CD4-positive, alpha-beta memory T cell (primary cell): ENCODE measurements at regions of chr3 and their contacts with region 1.

Region 1: DNA sequence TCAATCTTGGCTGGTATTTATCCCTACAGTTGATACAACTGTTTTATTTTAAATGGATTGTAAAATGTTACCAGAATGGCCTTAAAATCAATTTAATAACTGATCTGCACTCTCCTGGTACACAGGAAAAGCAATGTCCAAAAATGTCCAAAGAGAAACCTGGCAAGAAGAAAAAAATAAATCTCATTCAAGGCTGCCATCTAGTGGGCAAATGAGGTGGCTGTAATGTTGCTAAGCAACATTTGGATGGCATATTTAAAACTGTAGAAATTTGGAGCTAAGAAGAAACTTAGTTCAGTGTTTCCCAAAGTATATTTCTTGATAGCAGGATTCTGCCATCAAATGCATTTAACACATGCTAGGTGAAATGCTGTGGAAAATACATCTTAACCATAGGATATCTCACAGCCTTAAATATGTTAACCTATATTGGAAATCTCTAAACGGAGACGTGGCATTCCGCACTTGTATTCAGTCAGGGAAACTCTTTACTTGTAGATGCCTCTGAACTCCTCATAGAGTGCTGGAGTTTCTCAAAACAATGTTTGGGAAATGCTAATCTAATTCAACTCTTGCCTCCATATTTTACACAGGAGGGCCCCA is 216.8 kb downstream of the ERC2 start:
- DNase-seq: peak in 2 of 5 donors; percentile 2 to 12
- H3K4me3 ChIP-seq: no peak overlapping the region
- H3K4me3 Mint-ChIP-seq: no peak overlapping the region
- H3K27ac ChIP-seq: no peak overlapping the region
- H3K27ac Mint-ChIP-seq: no peak overlapping the region
- H3K4me1 ChIP-seq: no peaks in the 10 kb centered on the region
- H3K4me1 Mint-ChIP-seq: no peaks in the 10 kb centered on the region
- H3K27me3 ChIP-seq: no peaks in the 10 kb centered on the region
- H3K27me3 Mint-ChIP-seq: no peaks in the 10 kb centered on the region

Region 2: GRCh38 chr3:56238299-56238698 is 13.1 kb before region 1 on chr3:
- CTCF ChIA-PET with region 1: interaction called, 17 read pairs
- POLR2A ChIA-PET with region 1: no interaction called
- intact Hi-C with region 1: no loop called
- DNase-seq: no peak
- H3K4me3 ChIP-seq: no peak overlapping the region
- H3K4me3 Mint-ChIP-seq: no peak overlapping the region
- H3K27ac ChIP-seq: no peak overlapping the region
- H3K27ac Mint-ChIP-seq: no peak overlapping the region
- H3K4me1 ChIP-seq: no peaks in the 10 kb centered on the region
- H3K4me1 Mint-ChIP-seq: no peaks in the 10 kb centered on the region
- H3K27me3 ChIP-seq: no peaks in the 10 kb centered on the region
- H3K27me3 Mint-ChIP-seq: peaks cover 0 to 5% of the 10 kb centered on the region in 2 donors

Region 3: DNA sequence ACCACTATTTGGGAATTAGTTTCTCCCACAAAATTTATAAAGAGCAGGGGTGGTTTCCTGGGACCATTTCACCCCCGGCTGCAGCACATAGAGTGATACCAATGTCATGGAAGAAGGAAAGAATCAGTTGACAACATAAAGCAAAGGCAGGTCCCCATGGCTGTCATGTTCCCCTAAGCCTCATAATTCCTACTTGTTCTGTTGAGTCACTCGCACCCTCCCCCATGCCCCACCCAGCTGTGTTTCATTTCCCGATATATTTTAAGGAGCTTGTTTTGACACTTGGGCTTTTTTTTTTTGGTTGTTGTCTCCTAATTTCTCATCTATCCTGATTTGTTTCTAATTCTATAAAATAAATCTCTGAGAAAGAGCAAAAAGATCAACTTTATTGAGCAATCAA is 191.9 kb after region 1 on chr3:
- CTCF ChIA-PET with region 1: no interaction called
- POLR2A ChIA-PET with region 1: no interaction called
- intact Hi-C with region 1: no loop called
- DNase-seq: no peak
- H3K4me3 ChIP-seq: no peak overlapping the region
- H3K4me3 Mint-ChIP-seq: no peak overlapping the region
- H3K27ac ChIP-seq: no peak overlapping the region
- H3K27ac Mint-ChIP-seq: no peak overlapping the region
- H3K4me1 ChIP-seq: no peaks in the 10 kb centered on the region
- H3K4me1 Mint-ChIP-seq: peaks cover 0 to 1% (median 0%) of the 10 kb centered on the region in 4 donors
- H3K27me3 ChIP-seq: no peaks in the 10 kb centered on the region
- H3K27me3 Mint-ChIP-seq: peaks cover 14 to 15% of the 10 kb centered on the region in 2 donors